Activated CD8-positive, alpha-beta T cell treated with anti-CD3 and anti-CD28 coated beads for 36 hours (primary cell): ENCODE measurements at regions of chr19 and their contacts with region 1.

Region 1: GRCh38 chr19:17390665-17391370 is 3.2 kb downstream of the CCDC194 start:
- DNase-seq: peak; percentile 95
- ATAC-seq: peak; percentile 99
- H3K4me3 Mint-ChIP-seq: peak overlapping the region; percentile 81
- H3K27ac Mint-ChIP-seq: no peak overlapping the region
- H3K4me1 Mint-ChIP-seq: peaks cover 17% of the 10 kb centered on the region
- H3K27me3 Mint-ChIP-seq: peaks cover 5% of the 10 kb centered on the region
- CTCF ChIP-seq: peak; percentile 78

Region 2: DNA sequence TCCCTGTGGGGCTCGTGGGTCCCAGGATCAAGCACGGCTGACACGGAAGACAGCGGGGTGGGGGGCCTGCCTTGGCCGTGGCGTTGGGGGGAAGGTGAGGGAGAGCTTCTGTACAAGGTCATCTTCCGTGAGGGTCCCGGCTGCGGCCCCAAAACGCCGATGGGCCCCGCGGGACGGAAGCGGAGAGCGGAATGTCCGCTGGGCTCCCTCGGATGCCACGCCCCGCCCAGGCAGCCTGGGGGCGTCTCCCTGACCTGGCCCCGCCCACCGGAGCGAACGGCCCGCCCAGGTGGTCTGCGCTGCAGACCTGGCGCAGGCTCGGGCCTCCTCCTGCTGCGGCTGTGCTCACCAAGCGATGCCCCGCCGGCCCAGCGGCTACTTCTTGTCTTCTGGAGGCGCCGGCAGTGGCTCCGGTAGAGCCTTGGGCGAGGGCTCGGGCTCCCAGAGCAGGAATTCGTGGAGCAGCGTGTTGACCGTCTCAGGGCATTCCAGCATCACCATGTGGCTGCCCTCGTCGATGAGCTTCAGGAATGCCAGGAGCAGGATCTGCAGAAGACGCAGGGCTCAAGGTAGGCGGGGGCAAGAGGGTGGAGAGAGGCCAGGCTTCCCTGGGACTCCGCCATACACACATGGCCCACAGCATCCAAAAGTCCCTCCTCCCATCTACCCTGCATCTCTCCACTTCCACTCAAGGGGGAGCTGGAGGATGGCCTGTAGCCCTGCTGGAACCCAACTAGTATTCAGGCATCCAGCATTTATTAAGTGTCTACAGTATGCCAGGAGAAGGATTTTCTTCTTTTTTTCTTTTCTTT is 98.3 kb before region 1 on chr19:
- CTCF ChIA-PET with region 1: interaction called, 20 read pairs
- POLR2A ChIA-PET with region 1: interaction called, 3 read pairs
- intact Hi-C with region 1: no loop called
- DNase-seq: peak; percentile 87
- ATAC-seq: peak; percentile 97
- H3K4me3 Mint-ChIP-seq: peak overlapping the region; percentile 90
- H3K27ac Mint-ChIP-seq: peak overlapping the region; percentile 85
- H3K4me1 Mint-ChIP-seq: peaks cover 7% of the 10 kb centered on the region
- H3K27me3 Mint-ChIP-seq: no peaks in the 10 kb centered on the region
- CTCF ChIP-seq: peak; percentile 81

Region 3: DNA sequence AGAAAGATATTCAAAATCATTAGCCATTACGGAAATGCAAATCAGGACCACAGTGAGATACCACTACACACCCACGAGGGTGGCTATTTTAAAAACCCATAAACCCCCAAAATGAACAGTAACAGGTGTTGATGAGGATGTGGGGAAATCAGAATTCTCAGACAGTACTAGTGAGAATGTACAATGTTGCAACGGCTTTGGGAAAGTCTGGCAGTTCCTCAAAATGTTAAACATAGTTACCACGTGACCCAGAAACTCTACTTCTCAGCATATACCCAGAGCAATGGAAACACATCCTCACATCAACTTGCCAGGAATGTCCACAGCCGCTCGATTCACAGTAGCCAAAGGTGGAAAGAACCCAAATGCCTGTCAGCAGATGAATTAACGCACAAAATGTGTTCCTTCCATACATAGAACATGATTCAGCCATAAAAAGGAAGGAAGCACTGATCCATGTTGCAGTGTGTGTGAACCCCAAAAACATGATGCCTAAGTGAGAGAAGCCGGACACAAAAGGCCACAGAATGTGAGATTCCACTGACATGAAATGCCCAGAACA is 20.7 kb before region 1 on chr19:
- CTCF ChIA-PET with region 1: interaction called, 25 read pairs
- POLR2A ChIA-PET with region 1: no interaction called
- intact Hi-C with region 1: no loop called
- DNase-seq: no peak
- ATAC-seq: peak; percentile 34
- H3K4me3 Mint-ChIP-seq: no peak overlapping the region
- H3K27ac Mint-ChIP-seq: no peak overlapping the region
- H3K4me1 Mint-ChIP-seq: peaks cover 7% of the 10 kb centered on the region
- H3K27me3 Mint-ChIP-seq: peaks cover 7% of the 10 kb centered on the region
- CTCF ChIP-seq: no peak

Region 4: DNA sequence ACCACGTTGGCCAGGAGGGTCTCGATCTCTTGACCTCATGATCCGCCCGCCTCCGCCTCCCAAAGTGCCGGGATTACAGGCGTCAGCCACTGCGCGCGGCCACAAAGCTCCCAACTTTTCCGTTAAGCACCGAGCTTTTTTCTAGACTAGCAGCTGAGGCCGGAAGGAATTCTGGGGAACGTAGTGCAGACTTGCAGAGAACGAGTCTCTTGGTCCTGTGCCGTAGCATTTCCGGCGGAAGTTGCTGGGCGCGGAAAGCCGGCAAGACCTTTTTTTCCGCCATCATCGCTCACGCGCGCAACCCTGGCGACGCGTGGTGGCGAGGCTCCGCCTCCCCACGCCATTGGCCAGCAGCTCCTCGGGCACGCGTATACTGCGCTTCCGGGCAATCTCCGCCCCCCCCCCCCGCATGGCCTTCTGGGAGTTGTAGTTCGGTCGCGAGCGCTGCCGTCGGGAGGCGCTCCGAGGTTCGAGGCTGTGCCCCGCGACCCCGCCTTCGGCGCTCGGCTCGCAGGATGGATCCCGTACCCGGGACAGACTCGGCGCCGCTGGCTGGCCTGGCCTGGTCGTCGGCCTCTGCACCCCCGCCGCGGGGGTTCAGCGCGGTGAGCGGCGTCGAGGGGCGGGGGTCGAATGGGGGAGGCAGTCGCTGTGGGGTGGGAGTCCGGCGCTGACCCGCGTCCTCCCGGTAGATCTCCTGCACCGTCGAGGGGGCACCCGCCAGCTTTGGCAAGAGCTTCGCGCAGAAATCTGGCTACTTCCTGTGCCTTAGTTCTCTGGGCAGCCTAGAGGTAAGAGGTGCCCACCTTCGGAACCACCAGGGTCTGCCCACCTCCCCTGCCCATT is 29.0 kb after region 1 on chr19 and contains the start of gene MVB12A:
- CTCF ChIA-PET with region 1: interaction called, 10 read pairs
- POLR2A ChIA-PET with region 1: no interaction called
- intact Hi-C with region 1: no loop called
- DNase-seq: peak; percentile 97
- ATAC-seq: peak; percentile 97
- H3K4me3 Mint-ChIP-seq: peak within 1 kb of the TSS; percentile 91
- H3K27ac Mint-ChIP-seq: peak within 1 kb of the TSS; percentile 90
- H3K4me1 Mint-ChIP-seq: peaks cover 13% of the 10 kb centered on the region
- H3K27me3 Mint-ChIP-seq: no peaks in the 10 kb centered on the region
- CTCF ChIP-seq: no peak
- total RNA-seq, gene MVB12A: 28.1 to 31.8 TPM